Calu3 (cell line): ENCODE measurements at regions of chr21 and their contacts with region 1.

Region 1: DNA sequence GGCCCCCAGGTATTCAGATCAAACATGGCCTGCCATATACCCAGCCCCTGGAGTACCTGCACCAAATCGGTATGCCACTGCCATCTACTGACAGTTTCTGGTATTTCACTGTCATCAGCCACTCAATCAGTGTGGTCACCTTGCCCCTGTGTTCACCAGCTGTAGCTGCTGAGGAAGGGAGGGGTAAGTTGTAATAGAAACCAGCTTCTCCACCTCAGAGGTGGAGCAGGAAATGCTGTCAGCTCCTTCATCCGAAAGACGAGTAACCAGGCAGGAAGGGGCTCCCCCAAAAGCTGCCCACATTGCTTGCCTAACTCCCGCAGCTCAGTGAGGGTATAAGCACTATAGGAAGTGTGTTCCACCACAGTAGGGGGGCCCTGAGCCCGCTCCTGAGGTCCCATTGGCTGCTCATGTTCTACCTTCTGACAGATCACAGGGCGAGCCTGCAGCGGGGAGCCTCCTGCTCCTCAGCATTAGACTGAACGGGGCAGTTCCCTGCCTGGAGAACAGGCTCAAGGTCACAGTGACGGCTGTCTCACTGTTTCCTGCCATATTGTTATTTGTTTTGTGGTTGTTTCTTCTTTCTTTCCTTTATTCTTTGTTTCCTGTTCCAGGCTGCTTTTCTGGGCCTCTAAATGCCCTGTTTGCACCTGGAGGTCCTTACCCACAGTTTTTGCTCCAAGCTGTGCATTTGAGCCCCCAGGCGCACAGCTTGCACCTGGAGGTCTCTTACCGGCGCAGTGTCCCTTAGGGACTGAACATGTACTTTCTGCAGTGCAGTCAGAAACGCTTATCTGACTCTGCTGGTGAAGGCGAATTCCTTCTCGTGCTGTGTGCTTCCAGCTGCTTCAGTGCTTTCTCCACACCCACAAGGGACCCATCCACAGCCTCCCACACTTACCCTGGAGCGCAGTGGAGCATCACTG is 1638.3 kb downstream of the MRPL39 start:
- DNase-seq: peak; percentile 56
- H3K4me3 Mint-ChIP-seq: peak overlapping the region; percentile 4
- H3K27ac Mint-ChIP-seq: no peak overlapping the region
- H3K4me1 Mint-ChIP-seq: peaks cover 8% of the 10 kb centered on the region
- H3K27me3 Mint-ChIP-seq: no peaks in the 10 kb centered on the region
- CTCF ChIP-seq: peak; percentile 24

Region 2: GRCh38 chr21:23853796-23854379 is 115.1 kb before region 1 on chr21:
- CTCF ChIA-PET with region 1: no interaction called
- intact Hi-C with region 1: loop called (anchors 5 kb)
- DNase-seq: peak; percentile 1
- H3K4me3 Mint-ChIP-seq: no peak overlapping the region
- H3K27ac Mint-ChIP-seq: no peak overlapping the region
- H3K4me1 Mint-ChIP-seq: no peaks in the 10 kb centered on the region
- H3K27me3 Mint-ChIP-seq: no peaks in the 10 kb centered on the region
- CTCF ChIP-seq: no peak